ENCODE measurements at regions of chr14 and their contacts with region 1.

Region 1: DNA sequence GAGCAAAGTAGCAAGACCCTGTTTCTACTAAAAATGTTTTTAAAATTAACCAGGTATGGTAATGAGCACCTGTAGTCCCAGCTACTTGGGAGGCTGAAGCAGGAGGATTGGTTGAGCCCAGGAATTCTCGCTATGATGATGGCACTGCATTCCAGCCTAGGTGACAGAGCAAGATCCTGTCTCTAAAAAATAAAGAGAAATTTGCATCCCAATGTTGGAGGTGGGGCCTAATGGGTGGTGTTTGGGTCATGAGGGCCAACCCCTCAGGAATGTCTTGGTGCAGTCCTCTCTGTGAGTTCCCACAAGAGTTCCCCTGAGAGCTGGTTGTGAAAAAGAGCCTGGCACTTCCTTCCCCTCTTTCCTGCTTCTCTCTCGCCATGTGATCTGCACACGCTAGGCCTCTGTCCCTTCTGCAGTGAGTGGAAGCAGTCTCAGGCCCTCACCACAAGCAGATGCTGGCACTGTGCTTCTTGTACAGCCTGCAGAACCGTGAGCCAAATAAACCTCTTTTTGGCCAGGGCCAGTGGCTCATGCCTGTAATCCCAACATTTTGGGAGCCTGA is 11.3 kb downstream of the ACOT6 start:
- DNase-seq: no peak
- ATAC-seq: no peak

Region 2: GRCh38 chr14:73696466-73697400 is 73.2 kb after region 1 on chr14:
- intact Hi-C with region 1: loop called (anchors 5 kb)
- DNase-seq: no peak
- ATAC-seq: peak; percentile 67

Measured in sciatic nerve (tissue), 2 donors.